CD8-positive, alpha-beta T cell (primary cell): ENCODE measurements at regions of chr7 and their contacts with region 1.

Region 1: DNA sequence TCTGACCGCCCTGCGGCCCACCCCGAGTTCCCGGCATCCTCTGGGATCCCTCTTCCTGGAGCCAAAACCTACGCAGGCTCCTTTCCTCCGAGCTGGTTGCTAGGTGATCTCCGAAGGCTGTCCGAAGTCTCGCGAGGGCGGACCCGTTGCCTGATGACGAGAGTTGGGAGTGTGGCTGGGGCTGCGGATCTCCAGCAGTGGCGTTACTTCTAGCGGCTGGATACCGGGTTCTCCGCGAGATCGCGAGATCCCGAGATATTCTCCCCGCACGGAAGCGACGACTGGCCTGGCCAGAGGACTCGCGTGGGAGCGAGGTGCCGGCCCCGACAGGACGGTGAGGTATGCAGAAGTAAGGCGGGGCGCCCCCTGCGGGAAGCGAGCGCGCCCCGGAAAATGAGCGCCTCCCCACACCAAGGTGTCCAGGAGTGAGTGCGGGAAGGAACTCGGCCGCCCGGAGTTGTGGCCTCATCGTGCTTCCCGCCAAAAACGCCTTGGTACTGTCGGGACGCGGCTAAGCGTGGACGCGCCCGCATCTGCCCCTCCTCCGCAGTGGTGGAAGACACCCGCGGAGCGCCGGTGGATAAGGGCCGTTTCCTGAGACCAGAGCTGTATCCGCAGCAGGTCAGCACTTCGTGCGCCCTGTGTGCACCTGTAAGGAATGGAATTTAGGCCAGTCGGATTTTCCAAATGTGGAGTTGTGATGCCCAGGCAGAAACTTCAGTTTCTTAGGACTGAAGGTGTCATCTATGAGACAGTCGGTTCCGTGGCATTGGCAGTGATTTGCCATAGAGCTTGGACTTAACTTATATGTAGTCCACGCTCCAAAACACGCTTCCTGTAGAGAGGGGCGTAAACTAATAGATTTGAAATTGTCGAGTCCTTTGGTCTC is at the start of gene AGBL3:
- DNase-seq: peak; percentile 78 to 94 (median 89)
- ATAC-seq: peak; percentile 87
- H3K4me3 ChIP-seq: peak within 1 kb of the TSS; percentile 73 to 83
- H3K4me3 Mint-ChIP-seq: peak within 1 kb of the TSS; percentile 98
- H3K27ac ChIP-seq: peak within 1 kb of the TSS; percentile 90 to 99
- H3K27ac Mint-ChIP-seq: peak within 1 kb of the TSS; percentile 99
- H3K4me1 ChIP-seq: peaks cover 35% of the 10 kb centered on the region
- H3K4me1 Mint-ChIP-seq: peaks cover 42% of the 10 kb centered on the region
- H3K27me3 ChIP-seq: no peaks in the 10 kb centered on the region
- H3K27me3 Mint-ChIP-seq: no peaks in the 10 kb centered on the region
- CTCF ChIP-seq: peak; percentile 68
- total RNA-seq, gene AGBL3: 2.7 to 2.8 TPM

Region 2: DNA sequence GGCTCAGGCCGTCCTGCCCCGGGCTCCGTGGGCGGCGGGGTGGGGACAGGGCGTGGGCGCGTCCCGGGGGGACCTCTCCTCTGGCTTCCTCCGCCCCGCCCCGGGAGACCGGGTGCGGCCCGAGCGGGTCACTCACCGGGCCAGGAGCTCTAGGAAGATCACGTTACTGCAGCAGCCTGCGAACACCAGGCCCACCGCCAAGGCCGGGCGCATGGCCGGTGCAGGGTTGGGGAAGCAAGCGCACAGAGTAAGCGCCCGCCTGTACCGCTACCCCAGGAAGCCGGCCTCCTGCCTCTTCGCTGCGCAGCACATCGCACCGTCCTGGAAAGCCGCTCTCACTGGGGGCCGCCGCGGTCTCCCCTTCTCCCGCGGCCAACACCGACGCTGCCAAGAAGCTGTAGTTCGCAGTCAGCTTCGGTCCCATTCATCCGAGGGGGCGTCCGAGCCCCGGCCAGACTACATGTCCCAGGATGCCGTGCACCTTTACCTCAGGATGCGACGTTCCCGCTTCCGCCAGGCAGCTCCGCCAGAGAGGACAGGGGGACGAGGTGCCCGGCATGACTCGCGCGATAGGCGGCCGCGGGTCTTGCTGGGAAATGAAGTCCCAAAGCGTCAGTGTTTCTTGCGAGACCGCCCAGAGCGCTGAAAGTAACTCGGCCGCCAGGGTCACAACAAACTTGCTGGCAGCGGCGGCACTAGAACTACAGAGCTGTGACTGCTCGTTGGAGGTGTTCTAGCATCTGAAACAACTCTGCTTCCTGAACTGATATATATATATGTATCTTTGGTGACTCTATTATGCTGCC is 669.9 kb before region 1 on chr7 and contains the start of gene SLC35B4:
- CTCF ChIA-PET with region 1: no interaction called
- POLR2A ChIA-PET with region 1: no interaction called
- intact Hi-C with region 1: loop called (anchors 5 kb)
- DNase-seq: peak; percentile 88 to 97 (median 94)
- ATAC-seq: peak; percentile 97
- H3K4me3 ChIP-seq: peak within 1 kb of the TSS; percentile 88 to 98
- H3K4me3 Mint-ChIP-seq: peak within 1 kb of the TSS; percentile 97
- H3K27ac ChIP-seq: peak within 1 kb of the TSS; percentile 58 to 72
- H3K27ac Mint-ChIP-seq: peak within 1 kb of the TSS; percentile 92
- H3K4me1 ChIP-seq: peaks cover 14% of the 10 kb centered on the region
- H3K4me1 Mint-ChIP-seq: peaks cover 25% of the 10 kb centered on the region
- H3K27me3 ChIP-seq: no peaks in the 10 kb centered on the region
- H3K27me3 Mint-ChIP-seq: peaks cover 3% of the 10 kb centered on the region
- CTCF ChIP-seq: peak; percentile 29
- total RNA-seq, gene SLC35B4: 5.1 to 7.0 TPM

Region 3: DNA sequence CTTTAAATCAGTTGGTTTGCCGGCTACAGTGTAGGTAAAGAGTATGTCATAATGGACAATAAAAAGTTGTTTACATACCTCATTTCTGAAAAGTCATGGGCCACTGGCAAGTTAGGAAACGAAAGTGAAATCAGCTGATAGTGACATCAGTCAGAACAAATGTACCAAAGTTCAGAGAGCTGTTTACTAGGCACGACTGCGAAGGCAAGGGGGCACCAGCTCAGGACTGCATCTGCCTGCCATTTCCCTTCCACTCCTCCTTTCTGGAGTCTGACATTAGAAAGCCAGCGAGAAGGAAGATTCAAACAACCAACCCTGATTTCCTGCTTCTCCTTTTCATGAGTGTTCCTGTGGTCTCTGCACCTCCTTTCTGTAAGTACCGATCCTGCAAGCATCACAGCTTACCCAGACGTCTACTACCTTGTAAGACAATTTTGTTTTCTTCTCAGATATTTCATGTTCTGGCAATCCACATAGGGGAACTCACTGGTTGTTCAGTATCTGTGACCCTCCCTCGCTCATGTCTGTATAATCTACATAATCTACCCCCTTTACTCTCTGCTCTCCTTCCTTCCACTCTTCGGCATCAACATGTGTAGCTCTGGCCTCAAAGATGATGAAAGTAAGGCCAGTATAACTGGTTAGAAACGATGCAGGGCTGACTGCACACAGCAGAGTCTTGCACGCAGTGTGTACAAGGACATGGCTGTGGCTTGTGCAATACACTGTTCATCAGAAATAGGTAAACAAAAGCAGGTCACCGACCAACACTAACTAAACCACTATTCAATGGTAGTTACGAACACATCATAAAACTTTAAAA is 161.5 kb after region 1 on chr7 and contains the start of gene TMEM140:
- CTCF ChIA-PET with region 1: interaction called, 27 read pairs
- POLR2A ChIA-PET with region 1: interaction called, 34 read pairs
- intact Hi-C with region 1: loop called (anchors 1 to 2 kb)
- DNase-seq: peak; percentile 36 to 91 (median 63)
- ATAC-seq: peak; percentile 78
- H3K4me3 ChIP-seq: peak within 1 kb of the TSS; percentile 60 to 70
- H3K4me3 Mint-ChIP-seq: peak within 1 kb of the TSS; percentile 87
- H3K27ac ChIP-seq: peak within 1 kb of the TSS; percentile 92 to 97
- H3K27ac Mint-ChIP-seq: peak within 1 kb of the TSS; percentile 97
- H3K4me1 ChIP-seq: peaks cover 47% of the 10 kb centered on the region
- H3K4me1 Mint-ChIP-seq: peaks cover 80% of the 10 kb centered on the region
- H3K27me3 ChIP-seq: no peaks in the 10 kb centered on the region
- H3K27me3 Mint-ChIP-seq: no peaks in the 10 kb centered on the region
- CTCF ChIP-seq: no peak
- total RNA-seq, gene TMEM140: 18.8 to 21.8 TPM

Region 4: GRCh38 chr7:135180122-135180521 is 193.5 kb after region 1 on chr7:
- CTCF ChIA-PET with region 1: interaction called, 12 read pairs
- POLR2A ChIA-PET with region 1: no interaction called
- intact Hi-C with region 1: no loop called
- DNase-seq: no peak
- ATAC-seq: no peak
- H3K4me3 ChIP-seq: no peak overlapping the region
- H3K4me3 Mint-ChIP-seq: no peak overlapping the region
- H3K27ac ChIP-seq: no peak overlapping the region
- H3K27ac Mint-ChIP-seq: no peak overlapping the region
- H3K4me1 ChIP-seq: no peaks in the 10 kb centered on the region
- H3K4me1 Mint-ChIP-seq: no peaks in the 10 kb centered on the region
- H3K27me3 ChIP-seq: no peaks in the 10 kb centered on the region
- H3K27me3 Mint-ChIP-seq: no peaks in the 10 kb centered on the region
- CTCF ChIP-seq: no peak

Region 5: DNA sequence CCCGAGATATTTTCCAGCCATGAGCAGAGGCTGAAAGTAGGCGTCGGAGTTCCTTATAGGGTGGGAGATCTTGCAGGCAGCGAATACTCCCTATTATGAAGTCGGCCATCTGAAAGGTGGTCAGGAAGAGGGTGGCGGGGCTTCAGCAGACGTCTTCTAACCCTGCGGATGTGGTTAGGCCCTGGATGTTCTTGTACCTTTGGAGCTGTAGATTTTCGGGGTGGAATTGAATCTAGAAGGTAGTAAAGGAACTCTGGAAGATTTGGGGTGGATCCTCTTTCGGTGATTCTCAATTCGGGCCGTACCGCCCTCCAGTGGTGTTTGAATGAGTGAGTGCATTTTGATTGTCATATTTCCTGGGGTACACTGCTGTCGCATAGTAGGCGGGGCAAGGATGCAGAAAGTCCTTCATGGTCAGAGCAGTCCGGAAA is 571.7 kb after region 1 on chr7:
- CTCF ChIA-PET with region 1: no interaction called
- POLR2A ChIA-PET with region 1: no interaction called
- intact Hi-C with region 1: loop called (anchors 2 to 5 kb)
- DNase-seq: peak; percentile 37 to 87 (median 68)
- ATAC-seq: peak; percentile 52
- H3K4me3 ChIP-seq: peak overlapping the region; percentile 85 to 86
- H3K4me3 Mint-ChIP-seq: no peak overlapping the region
- H3K27ac ChIP-seq: peak overlapping the region; percentile 90 to 98
- H3K27ac Mint-ChIP-seq: no peak overlapping the region
- H3K4me1 ChIP-seq: peaks cover 16% of the 10 kb centered on the region
- H3K4me1 Mint-ChIP-seq: peaks cover 17% of the 10 kb centered on the region
- H3K27me3 ChIP-seq: no peaks in the 10 kb centered on the region
- H3K27me3 Mint-ChIP-seq: no peaks in the 10 kb centered on the region
- CTCF ChIP-seq: peak; percentile 52